Naive thymus-derived CD4-positive, alpha-beta T cell (primary cell): ENCODE measurements at regions of chr21 and their contacts with region 1.

Region 1: DNA sequence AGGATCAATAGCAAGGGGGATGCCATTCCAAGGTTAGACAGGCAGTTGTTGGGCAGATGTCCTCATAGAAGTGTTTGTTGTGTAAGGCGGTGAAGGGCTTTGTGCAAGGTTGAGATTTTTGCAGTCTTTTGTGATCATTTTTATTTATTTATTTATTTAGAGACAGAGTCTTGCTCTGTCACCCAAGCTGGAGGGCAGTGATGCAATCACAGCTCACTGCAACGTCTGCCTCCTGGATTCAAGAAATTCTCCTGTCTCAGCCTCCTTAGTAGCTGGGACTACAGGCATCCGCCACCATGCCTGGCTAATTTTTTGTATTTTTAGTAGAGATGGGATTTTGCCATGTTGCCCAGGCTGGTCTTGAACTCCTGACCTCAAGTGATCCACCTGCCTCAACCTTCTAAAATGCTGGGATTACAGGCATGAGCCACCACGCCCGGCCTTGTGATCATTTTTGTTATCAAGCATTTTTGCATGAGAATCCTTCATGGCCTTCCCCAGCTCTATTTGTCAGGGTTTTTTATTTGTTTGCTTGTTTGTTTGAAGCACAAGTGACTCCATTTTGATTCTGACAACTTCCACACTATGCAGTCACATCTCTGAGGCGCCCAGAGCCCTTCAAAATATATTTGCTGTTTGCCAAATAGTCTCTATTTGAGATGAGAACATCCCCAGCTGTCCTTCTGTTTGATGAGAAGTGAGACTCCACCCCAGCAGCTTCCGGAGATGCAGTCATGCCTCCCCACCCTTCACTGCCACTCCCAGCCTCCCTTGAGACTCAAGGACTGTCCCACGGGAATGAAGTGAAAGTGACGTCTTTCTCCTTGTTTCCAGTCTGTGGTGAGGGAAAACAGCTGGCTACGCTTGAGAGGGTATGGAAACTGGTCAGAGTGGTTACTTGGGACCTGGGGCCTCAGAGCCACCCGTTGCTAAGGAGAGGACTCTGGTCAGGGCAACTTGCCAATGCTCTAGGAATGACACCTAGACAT is 38.0 kb downstream of the TMEM50B start:
- DNase-seq: no peak
- ATAC-seq: no peak
- H3K4me3 ChIP-seq: no peak overlapping the region
- H3K4me3 Mint-ChIP-seq: no peak overlapping the region
- H3K27ac ChIP-seq: no peak overlapping the region
- H3K27ac Mint-ChIP-seq: peak overlapping the region in 6 of 9 donors; percentile 9 to 78 (median 55)
- H3K4me1 ChIP-seq: no peaks in the 10 kb centered on the region
- H3K4me1 Mint-ChIP-seq: peaks cover 4 to 10% (median 6%) of the 10 kb centered on the region in 7 donors
- H3K27me3 ChIP-seq: no peaks in the 10 kb centered on the region
- H3K27me3 Mint-ChIP-seq: no peaks in the 10 kb centered on the region

Region 2: GRCh38 chr21:32834916-32835235 is 606.9 kb before region 1 on chr21:
- CTCF ChIA-PET with region 1: no interaction called
- POLR2A ChIA-PET with region 1: no interaction called
- intact Hi-C with region 1: loop called in 1 of 2 experiments (anchors 2 kb)
- DNase-seq: no peak
- ATAC-seq: no peak
- H3K4me3 ChIP-seq: no peak overlapping the region
- H3K4me3 Mint-ChIP-seq: no peak overlapping the region
- H3K27ac ChIP-seq: no peak overlapping the region
- H3K27ac Mint-ChIP-seq: no peak overlapping the region
- H3K4me1 ChIP-seq: no peaks in the 10 kb centered on the region
- H3K4me1 Mint-ChIP-seq: peaks cover 0 to 2% (median 0%) of the 10 kb centered on the region in 7 donors
- H3K27me3 ChIP-seq: peaks cover 0 to 5% of the 10 kb centered on the region in 2 donors
- H3K27me3 Mint-ChIP-seq: peaks cover 0 to 30% (median 0%) of the 10 kb centered on the region in 5 donors

Region 3: GRCh38 chr21:32940079-32941014 is 501.4 kb before region 1 on chr21:
- CTCF ChIA-PET with region 1: interaction called, 7 read pairs
- POLR2A ChIA-PET with region 1: no interaction called
- intact Hi-C with region 1: loop called (anchors 2 to 10 kb)
- DNase-seq: peak in 8 of 9 donors; percentile 23 to 53 (median 40)
- ATAC-seq: peak; percentile 68
- H3K4me3 ChIP-seq: no peak overlapping the region
- H3K4me3 Mint-ChIP-seq: peak overlapping the region in 2 of 10 donors; percentile 28 to 45
- H3K27ac ChIP-seq: no peak overlapping the region
- H3K27ac Mint-ChIP-seq: no peak overlapping the region
- H3K4me1 ChIP-seq: no peaks in the 10 kb centered on the region
- H3K4me1 Mint-ChIP-seq: peaks cover 0 to 9% (median 6%) of the 10 kb centered on the region in 7 donors
- H3K27me3 ChIP-seq: no peaks in the 10 kb centered on the region
- H3K27me3 Mint-ChIP-seq: peaks cover 0 to 14% (median 0%) of the 10 kb centered on the region in 5 donors

Region 4: DNA sequence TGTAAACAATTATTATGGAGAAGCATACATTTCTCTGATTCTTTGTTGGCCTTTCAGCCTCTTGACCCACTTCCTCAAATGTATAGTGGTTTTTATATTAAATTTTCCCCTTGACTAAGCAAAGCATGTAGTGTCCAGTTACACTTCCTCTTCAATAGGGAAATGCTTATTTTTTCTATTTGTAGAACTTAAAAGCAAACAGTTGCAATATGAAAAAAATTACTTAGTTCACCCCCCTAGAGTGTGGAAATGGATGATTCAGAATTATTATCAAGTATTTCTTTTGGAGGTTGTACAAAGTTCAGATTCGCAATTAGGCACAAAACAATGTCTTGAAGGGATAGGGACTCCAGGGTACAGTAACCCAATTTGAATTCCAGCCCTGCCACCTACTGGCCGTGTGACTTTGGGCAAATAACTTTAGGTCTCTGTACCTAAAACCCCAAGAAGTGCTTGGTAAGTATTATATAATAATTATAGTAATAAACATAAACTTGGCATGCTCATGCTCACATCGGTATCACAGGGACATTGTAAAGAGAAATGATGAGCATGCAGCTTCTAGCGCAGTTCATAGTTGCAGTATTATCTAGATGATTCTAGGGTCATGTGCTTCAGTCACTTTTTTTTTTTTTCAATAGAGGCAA is 67.2 kb before region 1 on chr21:
- CTCF ChIA-PET with region 1: interaction called, 5 read pairs
- POLR2A ChIA-PET with region 1: interaction called, 3 read pairs
- intact Hi-C with region 1: loop called (anchors 1 kb)
- DNase-seq: peak in 7 of 9 donors; percentile 25 to 61 (median 49)
- ATAC-seq: peak; percentile 88
- H3K4me3 ChIP-seq: no peak overlapping the region
- H3K4me3 Mint-ChIP-seq: no peak overlapping the region
- H3K27ac ChIP-seq: no peak overlapping the region
- H3K27ac Mint-ChIP-seq: peak overlapping the region in 2 of 9 donors; percentile 21 to 45
- H3K4me1 ChIP-seq: peaks cover 0 to 3% of the 10 kb centered on the region in 2 donors
- H3K4me1 Mint-ChIP-seq: peaks cover 6 to 23% (median 12%) of the 10 kb centered on the region in 7 donors
- H3K27me3 ChIP-seq: peaks cover 0 to 6% of the 10 kb centered on the region in 2 donors
- H3K27me3 Mint-ChIP-seq: peaks cover 0 to 36% (median 4%) of the 10 kb centered on the region in 5 donors

Region 5: DNA sequence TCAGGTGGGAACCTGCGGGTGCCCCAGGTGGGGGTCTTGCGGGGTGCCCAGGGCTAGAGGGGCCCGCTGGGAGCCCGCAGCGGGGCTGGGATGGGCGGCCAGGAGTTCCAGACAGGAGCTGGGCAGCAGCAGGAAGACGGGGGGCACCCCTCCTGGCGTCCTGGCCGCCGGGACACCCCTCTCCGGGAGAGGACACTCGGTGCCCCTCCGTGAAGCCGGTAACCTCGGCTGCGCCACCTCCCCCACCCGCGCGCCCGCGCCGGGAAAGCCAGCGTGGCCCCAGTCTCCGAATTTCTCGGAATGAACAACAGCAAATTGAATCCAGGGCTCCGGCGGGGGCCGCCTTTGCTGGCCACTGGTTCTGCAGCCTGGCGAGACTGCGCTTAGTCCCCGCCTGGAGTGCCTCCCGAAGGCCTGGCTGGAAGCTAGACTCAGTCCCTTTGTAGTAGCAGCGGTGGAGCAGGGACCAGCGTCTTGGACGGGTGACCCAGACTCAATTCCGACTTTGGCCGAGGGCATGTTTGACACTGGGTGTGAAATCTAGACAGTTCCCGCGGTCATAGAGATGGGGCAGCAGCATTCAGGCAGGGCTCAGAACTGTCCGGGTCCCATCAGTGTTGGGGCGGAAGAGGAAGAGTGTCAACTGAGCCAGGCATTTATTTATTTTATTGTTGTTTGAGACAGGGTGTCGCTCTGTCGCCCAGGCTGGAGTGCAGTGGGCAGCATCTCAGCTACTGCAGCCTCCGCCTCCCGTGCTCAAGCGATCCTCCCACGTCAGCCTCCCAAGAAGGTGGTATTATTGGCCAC is 37.8 kb before region 1 on chr21:
- CTCF ChIA-PET with region 1: no interaction called
- POLR2A ChIA-PET with region 1: interaction called, 3 read pairs
- intact Hi-C with region 1: loop called in 1 of 2 experiments (anchors 5 kb)
- DNase-seq: peak in 7 of 9 donors; percentile 21 to 43 (median 29)
- ATAC-seq: peak; percentile 30
- H3K4me3 ChIP-seq: peak overlapping the region; percentile 77
- H3K4me3 Mint-ChIP-seq: peak overlapping the region; percentile 87 to 99 (median 97)
- H3K27ac ChIP-seq: peak overlapping the region; percentile 84
- H3K27ac Mint-ChIP-seq: peak overlapping the region; percentile 4 to 98 (median 94)
- H3K4me1 ChIP-seq: peaks cover 16 to 25% of the 10 kb centered on the region in 2 donors
- H3K4me1 Mint-ChIP-seq: peaks cover 25 to 60% (median 54%) of the 10 kb centered on the region in 7 donors
- H3K27me3 ChIP-seq: no peaks in the 10 kb centered on the region
- H3K27me3 Mint-ChIP-seq: peaks cover 0 to 63% (median 0%) of the 10 kb centered on the region in 5 donors

Region 6: DNA sequence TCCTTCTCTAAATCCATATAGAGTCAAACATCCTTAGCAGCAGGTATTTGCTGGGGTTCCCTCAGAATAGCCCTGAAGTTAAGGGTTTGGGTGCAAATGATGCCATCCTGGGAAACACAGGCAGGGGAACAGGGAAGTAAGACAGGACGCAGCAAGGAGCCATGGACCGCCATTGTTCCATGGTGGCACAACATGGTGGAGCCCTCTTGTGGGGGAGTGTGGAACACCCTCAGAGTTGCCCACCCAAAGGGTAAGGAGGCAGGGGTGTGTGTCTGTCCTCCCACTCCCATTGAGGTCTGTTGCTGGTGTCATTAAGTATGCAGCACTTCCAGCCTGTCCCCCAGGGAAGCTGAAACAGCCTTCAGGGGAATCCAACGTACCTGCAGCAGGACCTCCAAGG is 1193.5 kb after region 1 on chr21:
- CTCF ChIA-PET with region 1: no interaction called
- POLR2A ChIA-PET with region 1: no interaction called
- intact Hi-C with region 1: no loop called
- DNase-seq: no peak
- ATAC-seq: no peak
- H3K4me3 ChIP-seq: no peak overlapping the region
- H3K4me3 Mint-ChIP-seq: no peak overlapping the region
- H3K27ac ChIP-seq: no peak overlapping the region
- H3K27ac Mint-ChIP-seq: no peak overlapping the region
- H3K4me1 ChIP-seq: no peaks in the 10 kb centered on the region
- H3K4me1 Mint-ChIP-seq: peaks cover 4 to 20% (median 8%) of the 10 kb centered on the region in 7 donors
- H3K27me3 ChIP-seq: no peaks in the 10 kb centered on the region
- H3K27me3 Mint-ChIP-seq: peaks cover 0 to 18% (median 6%) of the 10 kb centered on the region in 5 donors